ENCODE measurements at regions of chr5 and their contacts with region 1.

Region 1: DNA sequence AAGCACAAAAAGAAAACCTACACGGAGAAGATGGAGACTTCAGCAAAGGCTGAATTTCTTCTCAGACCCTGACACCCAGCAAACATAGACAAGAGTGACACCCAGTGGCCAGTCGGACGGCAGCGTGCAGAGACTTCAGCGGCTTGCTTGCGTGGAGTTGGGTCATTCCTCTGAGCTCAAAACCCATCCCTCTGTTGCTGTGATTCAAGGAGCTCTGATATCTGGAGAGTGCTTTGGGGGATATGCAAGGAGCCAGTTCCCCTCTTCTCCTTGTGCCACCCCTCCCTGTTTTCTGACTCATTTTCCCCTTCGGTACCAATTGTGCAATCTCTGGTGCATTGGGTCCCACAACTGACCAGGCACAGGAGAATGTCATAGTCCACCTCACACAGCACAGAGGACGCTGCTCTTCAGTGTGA is 27.5 kb downstream of the SH3TC2 start:
- DNase-seq: peak; percentile 41 to 80
- H3K4me3 ChIP-seq: no peak overlapping the region
- H3K27ac ChIP-seq: no peak overlapping the region
- H3K4me1 ChIP-seq: no peaks in the 10 kb centered on the region
- H3K27me3 ChIP-seq: no peaks in the 10 kb centered on the region
- CTCF ChIP-seq: peak; percentile 92 to 94 (median 94)
- EP300 ChIP-seq: no peak
- POLR2A ChIP-seq: no peak
- RAD21 ChIP-seq: peak; percentile 96 to 97

Region 2: DNA sequence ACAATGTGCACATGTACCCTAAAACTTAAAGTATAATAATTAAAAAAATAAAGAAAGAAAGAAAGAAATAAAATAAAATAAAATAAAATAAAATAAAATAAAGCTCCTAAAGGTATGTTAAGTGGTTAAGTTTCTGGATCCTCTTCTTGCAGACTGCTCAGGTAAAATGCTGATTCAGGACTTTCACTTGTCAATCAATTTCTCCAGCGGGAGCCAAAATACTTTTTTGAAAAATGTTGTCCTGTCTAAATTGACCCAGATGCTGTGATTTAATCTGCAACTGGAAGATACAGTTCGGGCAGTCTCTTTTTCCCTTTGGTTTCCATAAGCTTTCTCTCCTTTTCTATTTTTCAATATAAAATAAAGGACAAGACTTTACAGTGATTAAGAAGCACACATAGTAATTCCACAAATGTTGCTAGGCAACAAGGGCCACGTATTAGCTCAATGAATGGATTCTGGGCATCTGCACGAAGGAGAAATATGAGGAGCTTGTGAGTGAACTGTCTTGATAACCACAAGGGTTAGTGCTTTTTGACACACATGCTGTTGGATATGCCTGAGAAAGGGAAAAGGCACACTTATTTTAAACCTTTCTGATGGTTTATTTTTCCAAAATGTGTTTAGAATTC is 419.6 kb before region 1 on chr5:
- CTCF ChIA-PET with region 1: no interaction called
- POLR2A ChIA-PET with region 1: no interaction called
- DNase-seq: no peak
- H3K4me3 ChIP-seq: no peak overlapping the region
- H3K27ac ChIP-seq: no peak overlapping the region
- H3K4me1 ChIP-seq: no peaks in the 10 kb centered on the region
- H3K27me3 ChIP-seq: no peaks in the 10 kb centered on the region
- CTCF ChIP-seq: no peak
- EP300 ChIP-seq: no peak
- POLR2A ChIP-seq: no peak
- RAD21 ChIP-seq: no peak

Region 3: DNA sequence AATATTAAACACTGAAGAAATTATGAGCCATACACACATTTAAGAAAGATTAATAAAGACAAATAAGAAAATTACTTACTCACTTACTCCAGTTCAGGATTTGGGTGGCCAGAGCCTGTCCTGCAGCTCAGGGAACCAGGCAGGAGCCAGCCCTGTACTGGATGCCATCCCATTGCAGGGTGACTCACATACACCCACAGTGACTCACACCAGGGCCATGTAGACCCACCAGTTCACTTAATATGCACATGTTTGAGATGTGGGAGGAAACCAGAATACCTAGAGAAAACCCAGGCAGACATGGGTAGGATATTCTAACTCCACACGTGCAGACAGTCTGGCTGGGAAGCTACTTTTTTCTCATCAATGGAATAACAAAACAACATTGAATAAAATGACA is 258.6 kb before region 1 on chr5:
- CTCF ChIA-PET with region 1: interaction called, 11 read pairs
- POLR2A ChIA-PET with region 1: no interaction called
- DNase-seq: no peak
- H3K4me3 ChIP-seq: no peak overlapping the region
- H3K27ac ChIP-seq: no peak overlapping the region
- H3K4me1 ChIP-seq: 0 out of 7 replicates have a peak, but pooled peaks cover 0 to 2% (median 0%) of the 10 kb centered on the region in 4 experiments
- H3K27me3 ChIP-seq: no peaks in the 10 kb centered on the region
- CTCF ChIP-seq: no peak
- EP300 ChIP-seq: no peak
- POLR2A ChIP-seq: no peak
- RAD21 ChIP-seq: no peak

Region 4: DNA sequence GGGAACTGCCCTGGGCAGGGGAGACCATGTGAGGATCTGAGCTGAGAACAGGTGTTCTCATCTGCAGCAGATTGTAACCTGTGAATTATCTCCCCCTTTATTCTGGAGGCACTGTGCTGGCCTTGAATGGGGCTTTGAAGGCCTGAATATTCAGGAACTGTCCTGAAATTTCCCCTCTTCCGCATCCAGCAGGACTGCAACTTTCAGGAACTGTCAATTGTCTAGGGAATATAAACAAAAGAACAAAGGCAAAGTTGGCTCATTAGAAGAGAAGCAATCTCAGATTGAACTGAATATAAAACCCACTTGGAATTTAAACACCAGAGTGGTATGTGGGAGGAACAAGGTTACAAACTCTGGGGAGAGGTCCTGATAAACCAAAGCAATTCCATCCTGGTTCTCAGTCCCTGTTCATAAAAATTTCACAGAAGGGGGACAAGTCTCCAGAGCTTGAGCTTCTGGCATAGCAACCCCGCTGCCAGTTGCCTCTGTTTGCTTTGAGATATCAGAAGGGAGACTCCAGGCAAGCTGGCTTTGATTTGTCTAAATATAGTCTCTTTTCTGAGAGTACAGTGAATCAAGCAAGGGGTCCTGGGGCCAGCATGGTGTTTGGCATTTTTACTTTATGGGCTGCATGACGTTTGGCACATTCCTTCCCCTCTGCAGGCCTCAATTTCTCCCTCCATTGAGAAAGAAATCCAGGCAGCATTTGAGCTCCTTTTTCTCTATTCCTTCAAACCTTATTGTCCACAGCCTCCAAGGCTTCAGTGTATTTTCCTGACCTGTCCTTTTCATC is 161.5 kb before region 1 on chr5:
- CTCF ChIA-PET with region 1: no interaction called
- POLR2A ChIA-PET with region 1: no interaction called
- DNase-seq: no peak
- H3K4me3 ChIP-seq: no peak overlapping the region
- H3K27ac ChIP-seq: no peak overlapping the region
- H3K4me1 ChIP-seq: no peaks in the 10 kb centered on the region
- H3K27me3 ChIP-seq: no peaks in the 10 kb centered on the region
- CTCF ChIP-seq: no peak
- EP300 ChIP-seq: no peak
- POLR2A ChIP-seq: no peak
- RAD21 ChIP-seq: no peak

Region 5: DNA sequence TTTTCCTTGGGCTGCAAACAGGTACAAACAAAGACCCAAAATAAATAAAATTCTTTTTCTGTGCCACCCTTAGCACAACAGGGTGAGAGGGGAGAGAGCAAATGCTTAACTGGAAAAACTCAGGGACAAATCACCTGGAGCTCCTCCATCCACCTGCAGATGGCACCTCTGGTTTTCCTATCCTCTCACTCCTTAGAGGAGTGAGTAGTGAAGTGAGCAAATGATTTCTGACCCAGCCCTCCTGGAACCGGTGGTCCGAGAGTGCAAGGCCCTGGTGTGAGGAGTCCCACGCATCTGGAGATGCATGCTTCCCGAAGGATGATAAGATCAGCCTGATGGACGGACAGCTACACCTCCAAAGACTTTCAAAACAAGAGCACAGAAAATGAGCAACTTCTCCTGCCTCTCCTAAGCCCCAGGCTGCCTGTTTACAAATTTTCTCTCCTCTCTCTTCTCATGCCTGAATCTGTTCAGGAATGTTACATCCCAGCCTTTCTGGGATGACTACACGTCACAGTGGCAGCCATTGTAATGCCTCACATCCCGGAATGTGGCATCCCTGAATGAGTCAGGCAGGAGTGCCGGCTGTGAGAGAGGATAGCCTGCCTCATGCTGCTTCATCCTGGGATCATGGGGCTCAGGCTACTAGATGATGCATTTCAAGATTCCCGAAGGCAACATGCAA is 122.5 kb before region 1 on chr5:
- CTCF ChIA-PET with region 1: interaction called, 26 read pairs
- POLR2A ChIA-PET with region 1: no interaction called
- DNase-seq: peak; percentile 53 to 68
- H3K4me3 ChIP-seq: no peak overlapping the region
- H3K27ac ChIP-seq: no peak overlapping the region; the same call in none of the 2 replicates
- H3K4me1 ChIP-seq: peaks cover 4 to 17% (median 9%) of the 10 kb centered on the region in 4 experiments
- H3K27me3 ChIP-seq: no peaks in the 10 kb centered on the region
- CTCF ChIP-seq: peak; percentile 29 to 56 (median 52)
- EP300 ChIP-seq: peak in 1 of 2 experiments; percentile 82; a peak in 1 of 3 replicates
- POLR2A ChIP-seq: no peak
- RAD21 ChIP-seq: peak; percentile 65 to 72

Region 6: DNA sequence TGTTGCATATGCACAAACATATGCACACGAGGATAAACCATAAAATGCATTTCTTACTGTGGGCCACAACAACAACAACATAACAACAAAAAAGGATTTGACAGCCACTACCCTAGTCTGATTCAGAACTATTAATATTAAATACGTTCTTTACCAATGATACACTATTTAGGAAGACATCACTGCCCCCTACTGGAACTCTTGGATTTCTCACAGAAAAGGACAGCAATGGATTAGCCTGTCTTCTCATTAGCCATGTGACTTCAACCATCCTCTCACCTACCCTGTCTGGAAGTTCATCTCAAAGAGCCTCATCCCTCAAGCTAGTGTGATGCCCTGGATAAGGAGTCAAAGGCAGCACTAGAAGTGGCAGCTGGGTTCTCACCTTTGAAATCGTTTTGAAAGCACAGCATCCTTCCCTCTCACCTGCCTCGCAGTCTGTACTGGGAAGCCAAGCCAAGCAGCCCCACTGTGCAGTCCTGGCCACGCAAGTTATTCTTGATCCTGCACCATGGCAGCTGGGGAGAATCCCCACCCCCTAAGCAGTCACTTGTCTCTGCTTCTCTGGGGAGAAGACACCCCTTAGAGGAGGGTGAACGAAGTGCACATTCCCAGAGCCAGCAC is 37.1 kb before region 1 on chr5:
- CTCF ChIA-PET with region 1: interaction called, 23 read pairs
- POLR2A ChIA-PET with region 1: no interaction called
- DNase-seq: no peak
- H3K4me3 ChIP-seq: no peak overlapping the region
- H3K27ac ChIP-seq: no peak overlapping the region
- H3K4me1 ChIP-seq: no peaks in the 10 kb centered on the region; a peak in 1 of 7 replicates
- H3K27me3 ChIP-seq: no peaks in the 10 kb centered on the region
- CTCF ChIP-seq: peak in 2 of 3 experiments; percentile 56 to 72; a peak in 2 of 4 replicates
- EP300 ChIP-seq: no peak
- POLR2A ChIP-seq: no peak
- RAD21 ChIP-seq: peak; percentile 70 to 74

Region 7: DNA sequence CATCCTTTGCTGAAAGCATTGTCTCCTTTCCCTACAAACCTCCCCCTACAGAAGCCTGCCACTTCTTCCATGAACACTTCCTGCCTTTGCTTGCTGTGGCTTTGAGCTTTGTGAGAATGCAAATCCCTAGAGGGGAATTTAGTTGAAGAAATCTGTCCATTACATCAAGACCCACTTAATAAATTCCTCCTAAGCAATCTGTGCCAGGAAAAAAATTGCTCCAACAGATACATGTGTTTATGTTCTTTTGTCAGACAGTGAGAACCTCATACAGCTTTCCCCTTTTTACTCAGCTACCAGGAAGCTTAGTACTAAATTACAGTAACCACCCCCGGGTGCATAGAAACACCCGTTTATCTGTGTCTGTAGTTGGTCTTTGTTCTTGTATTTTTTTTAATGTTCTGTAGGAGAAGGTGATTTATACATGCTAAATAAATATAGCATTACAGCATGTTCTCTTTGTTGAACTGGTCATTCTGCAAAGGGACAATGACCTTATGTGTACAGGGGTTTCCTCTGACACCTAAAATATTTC is 16.4 kb before region 1 on chr5:
- CTCF ChIA-PET with region 1: interaction called, 21 read pairs
- POLR2A ChIA-PET with region 1: no interaction called
- DNase-seq: no peak
- H3K4me3 ChIP-seq: no peak overlapping the region
- H3K27ac ChIP-seq: no peak overlapping the region
- H3K4me1 ChIP-seq: no peaks in the 10 kb centered on the region
- H3K27me3 ChIP-seq: no peaks in the 10 kb centered on the region
- CTCF ChIP-seq: no peak
- EP300 ChIP-seq: no peak
- POLR2A ChIP-seq: no peak
- RAD21 ChIP-seq: no peak

Region 8: DNA sequence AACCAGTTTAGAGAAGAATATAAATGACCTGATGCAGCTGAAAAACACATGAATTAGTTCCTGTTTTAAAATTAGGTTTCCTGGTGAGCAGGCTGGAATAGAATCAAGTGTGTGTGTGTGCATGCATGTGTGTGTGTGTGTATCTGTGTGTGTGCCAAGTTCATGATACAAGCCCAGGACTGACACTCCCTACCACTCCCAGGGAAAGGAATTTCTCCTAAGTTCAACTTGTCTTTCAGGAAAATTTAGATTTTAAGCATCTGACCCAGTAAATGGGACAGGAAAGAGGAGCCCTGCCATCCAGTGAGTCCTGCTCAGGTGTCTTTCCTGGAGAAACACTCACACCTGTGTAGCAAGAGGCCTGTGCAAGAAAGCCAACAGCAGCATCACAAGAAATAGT is 38.7 kb after region 1 on chr5:
- CTCF ChIA-PET with region 1: interaction called, 18 read pairs
- POLR2A ChIA-PET with region 1: no interaction called
- DNase-seq: no peak
- H3K4me3 ChIP-seq: no peak overlapping the region
- H3K27ac ChIP-seq: no peak overlapping the region
- H3K4me1 ChIP-seq: no peaks in the 10 kb centered on the region
- H3K27me3 ChIP-seq: no peaks in the 10 kb centered on the region
- CTCF ChIP-seq: no peak
- EP300 ChIP-seq: no peak
- POLR2A ChIP-seq: no peak
- RAD21 ChIP-seq: no peak

Measured in H1 (cell line).